ENCODE measurements at regions of chr13 and their contacts with region 1.

Region 1: GRCh38 chr13:71879129-71879535 is 12.1 kb upstream of the DACH1 start:
- DNase-seq: peak; percentile 69
- H3K4me3 Mint-ChIP-seq: no peak overlapping the region
- H3K27ac Mint-ChIP-seq: no peak overlapping the region
- H3K4me1 Mint-ChIP-seq: peaks cover 3% of the 10 kb centered on the region
- H3K27me3 Mint-ChIP-seq: peaks cover 3% of the 10 kb centered on the region

Region 2: GRCh38 chr13:70960841-70961443 is 918.2 kb before region 1 on chr13:
- intact Hi-C with region 1: loop called (anchors 2 kb)
- DNase-seq: no peak
- H3K4me3 Mint-ChIP-seq: no peak overlapping the region
- H3K27ac Mint-ChIP-seq: no peak overlapping the region
- H3K4me1 Mint-ChIP-seq: no peaks in the 10 kb centered on the region
- H3K27me3 Mint-ChIP-seq: no peaks in the 10 kb centered on the region

Region 3: DNA sequence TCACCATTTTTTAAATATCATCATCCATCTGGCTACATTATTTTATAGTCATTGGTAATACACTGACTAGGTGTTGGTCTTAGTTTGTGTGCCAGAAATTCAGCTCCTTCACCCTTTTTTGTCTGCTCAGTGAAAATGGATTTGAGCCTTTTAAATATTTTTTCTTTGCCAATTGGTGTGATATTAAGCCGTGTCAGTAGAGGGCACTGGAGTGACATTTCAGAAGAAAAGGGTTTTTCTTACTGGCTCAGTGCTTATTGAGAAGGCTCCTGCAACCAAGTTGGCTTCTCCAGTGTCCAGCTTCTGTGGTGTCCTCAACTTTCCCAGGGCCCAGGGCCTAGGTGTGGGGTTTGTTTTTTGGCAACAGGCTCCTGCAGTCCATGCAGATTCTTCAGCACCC is 558.7 kb before region 1 on chr13:
- intact Hi-C with region 1: loop called (anchors 2 kb)
- DNase-seq: peak; percentile 60
- H3K4me3 Mint-ChIP-seq: no peak overlapping the region
- H3K27ac Mint-ChIP-seq: no peak overlapping the region
- H3K4me1 Mint-ChIP-seq: no peaks in the 10 kb centered on the region
- H3K27me3 Mint-ChIP-seq: no peaks in the 10 kb centered on the region

Region 4: DNA sequence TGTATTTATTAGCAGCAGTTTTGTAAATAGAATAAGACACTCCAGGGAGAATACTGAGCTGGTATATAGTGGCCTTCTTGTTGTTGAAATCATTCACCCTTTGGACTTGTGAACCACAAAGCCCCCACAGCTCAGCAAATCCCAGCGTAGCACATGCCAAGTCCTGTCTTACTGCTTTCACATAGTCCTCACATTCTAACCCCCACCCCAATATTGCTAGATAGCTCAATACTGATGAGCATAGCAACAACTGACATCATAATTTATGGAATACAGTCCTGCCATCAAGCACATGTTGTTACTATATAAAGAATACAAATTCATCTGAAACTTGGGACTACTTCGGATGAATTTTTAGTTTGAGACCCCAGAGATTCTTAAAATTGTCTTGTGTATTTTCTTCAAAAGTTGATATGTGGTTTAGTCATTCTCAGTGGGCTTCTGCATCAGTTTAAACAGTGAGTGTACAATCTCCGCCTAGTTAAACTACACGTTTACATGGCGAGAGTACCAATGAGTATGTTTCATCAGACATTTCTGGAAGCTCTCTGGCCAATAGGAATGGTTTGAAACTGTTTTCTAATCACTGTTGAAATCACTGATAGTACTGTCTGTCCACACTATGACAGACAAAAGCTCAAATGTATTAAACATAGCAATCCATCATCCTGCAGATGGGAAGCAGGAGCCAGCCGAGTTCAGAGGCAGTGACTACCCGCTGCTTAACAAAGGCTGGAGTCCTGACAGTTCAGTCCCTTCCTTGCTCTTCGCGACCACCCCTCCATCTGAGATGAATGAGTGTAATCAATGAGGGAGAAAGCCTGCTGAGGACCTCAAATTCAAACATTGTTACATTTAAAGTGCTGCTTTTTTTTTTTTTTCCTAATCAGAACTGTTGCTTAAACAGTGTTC is 27.4 kb before region 1 on chr13:
- intact Hi-C with region 1: no loop called
- DNase-seq: no peak
- H3K4me3 Mint-ChIP-seq: no peak overlapping the region
- H3K27ac Mint-ChIP-seq: no peak overlapping the region
- H3K4me1 Mint-ChIP-seq: no peaks in the 10 kb centered on the region
- H3K27me3 Mint-ChIP-seq: peaks cover 3% of the 10 kb centered on the region